ENCODE measurements at regions of chr2 and their contacts with region 1.

Region 1: GRCh38 chr2:177263451-177264208 is 897 bp downstream of the NFE2L2 start:
- DNase-seq: peak; percentile 95
- H3K4me3 Mint-ChIP-seq: peak overlapping the region; percentile 93
- H3K27ac Mint-ChIP-seq: peak overlapping the region; percentile 99
- H3K4me1 Mint-ChIP-seq: peaks cover 49% of the 10 kb centered on the region
- H3K27me3 Mint-ChIP-seq: peaks cover 3% of the 10 kb centered on the region

Region 2: GRCh38 chr2:177195194-177195593 is 68.4 kb before region 1 on chr2:
- CTCF ChIA-PET with region 1: interaction called, 10 read pairs
- POLR2A ChIA-PET with region 1: interaction called, 6 read pairs
- DNase-seq: no peak
- H3K4me3 Mint-ChIP-seq: no peak overlapping the region
- H3K27ac Mint-ChIP-seq: no peak overlapping the region
- H3K4me1 Mint-ChIP-seq: peaks cover 12% of the 10 kb centered on the region
- H3K27me3 Mint-ChIP-seq: no peaks in the 10 kb centered on the region

Region 3: DNA sequence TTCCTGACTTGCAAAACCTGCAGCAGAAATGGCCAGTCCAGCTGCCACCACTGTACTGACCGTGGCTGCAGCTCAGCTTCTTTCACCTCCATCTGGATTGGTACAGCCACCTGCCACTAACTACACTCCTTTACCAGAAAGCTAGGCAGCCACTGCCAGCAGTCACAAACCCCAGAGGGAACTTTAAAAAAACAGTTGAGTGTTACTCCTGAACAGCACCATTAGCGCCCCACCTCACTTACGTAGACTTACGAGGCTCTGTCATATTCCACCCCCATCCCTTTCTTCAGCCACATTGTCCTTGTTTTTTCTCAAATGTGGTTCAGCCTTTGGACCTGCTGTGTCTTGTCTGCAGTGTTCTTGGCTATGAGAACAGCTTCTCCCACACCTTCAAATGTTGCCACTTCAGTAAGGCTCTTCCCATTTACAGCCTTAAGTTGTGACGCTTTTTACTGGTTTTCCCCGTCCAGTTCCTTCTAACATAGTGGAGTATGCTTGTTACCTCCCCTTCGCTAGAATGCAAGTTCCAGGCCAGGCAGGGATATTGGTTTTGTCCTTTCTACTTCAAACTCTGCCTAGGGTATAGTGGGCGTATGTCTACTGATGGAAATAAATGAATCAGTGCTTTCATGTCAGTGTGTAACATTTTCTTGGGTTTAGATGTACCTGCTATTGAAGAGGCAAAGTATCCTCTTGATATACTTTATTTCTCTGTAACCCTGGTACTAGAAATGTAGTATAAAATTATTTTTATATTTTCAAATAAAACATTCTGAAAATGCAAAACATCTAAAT is 34.0 kb before region 1 on chr2:
- CTCF ChIA-PET with region 1: interaction called, 5 read pairs
- POLR2A ChIA-PET with region 1: interaction called, 135 read pairs
- DNase-seq: no peak
- H3K4me3 Mint-ChIP-seq: no peak overlapping the region
- H3K27ac Mint-ChIP-seq: peak overlapping the region; percentile 48
- H3K4me1 Mint-ChIP-seq: peaks cover 35% of the 10 kb centered on the region
- H3K27me3 Mint-ChIP-seq: no peaks in the 10 kb centered on the region

Region 4: GRCh38 chr2:177281400-177282180 is 18.0 kb after region 1 on chr2:
- CTCF ChIA-PET with region 1: interaction called, 18 read pairs
- POLR2A ChIA-PET with region 1: interaction called, 88 read pairs
- DNase-seq: no peak
- H3K4me3 Mint-ChIP-seq: no peak overlapping the region
- H3K27ac Mint-ChIP-seq: no peak overlapping the region
- H3K4me1 Mint-ChIP-seq: peaks cover 6% of the 10 kb centered on the region
- H3K27me3 Mint-ChIP-seq: no peaks in the 10 kb centered on the region

Region 5: GRCh38 chr2:177314194-177314593 is 50.6 kb after region 1 on chr2:
- CTCF ChIA-PET with region 1: interaction called, 5 read pairs
- POLR2A ChIA-PET with region 1: interaction called, 25 read pairs
- DNase-seq: no peak
- H3K4me3 Mint-ChIP-seq: no peak overlapping the region
- H3K27ac Mint-ChIP-seq: no peak overlapping the region
- H3K4me1 Mint-ChIP-seq: peaks cover 17% of the 10 kb centered on the region
- H3K27me3 Mint-ChIP-seq: no peaks in the 10 kb centered on the region

Measured in activated CD4-positive, alpha-beta memory T cell treated with anti-CD3 and anti-CD28 coated beads, Interleukin-2, amount 10 ng/mL, durations not matched to agents 7 days and 5 days (primary cell).